MCF 10A (cell line): ENCODE measurements at regions of chr10 and their contacts with region 1.

Region 1: GRCh38 chr10:3636356-3637181 is 148.4 kb downstream of the KLF6 start:
- DNase-seq: peak; percentile 86
- H3K4me3 Mint-ChIP-seq: peak overlapping the region; percentile 71
- H3K27ac Mint-ChIP-seq: peak overlapping the region; percentile 82
- H3K4me1 Mint-ChIP-seq: peaks cover 12% of the 10 kb centered on the region
- H3K27me3 Mint-ChIP-seq: no peaks in the 10 kb centered on the region
- CTCF ChIP-seq: no peak

Region 2: GRCh38 chr10:3623746-3624145 is 12.8 kb before region 1 on chr10:
- CTCF ChIA-PET with region 1: interaction called, 3 read pairs
- POLR2A ChIA-PET with region 1: interaction called, 12 read pairs
- intact Hi-C with region 1: no loop called
- DNase-seq: peak; percentile 76
- H3K4me3 Mint-ChIP-seq: peak overlapping the region; percentile 47
- H3K27ac Mint-ChIP-seq: peak overlapping the region; percentile 82
- H3K4me1 Mint-ChIP-seq: peaks cover 11% of the 10 kb centered on the region
- H3K27me3 Mint-ChIP-seq: no peaks in the 10 kb centered on the region
- CTCF ChIP-seq: no peak

Region 3: GRCh38 chr10:3662775-3663174 is 26.2 kb after region 1 on chr10:
- CTCF ChIA-PET with region 1: no interaction called
- POLR2A ChIA-PET with region 1: no interaction called
- intact Hi-C with region 1: no loop called
- DNase-seq: no peak
- H3K4me3 Mint-ChIP-seq: no peak overlapping the region
- H3K27ac Mint-ChIP-seq: peak overlapping the region; percentile 5
- H3K4me1 Mint-ChIP-seq: no peaks in the 10 kb centered on the region
- H3K27me3 Mint-ChIP-seq: no peaks in the 10 kb centered on the region
- CTCF ChIP-seq: no peak